Activated CD8-positive, alpha-beta T cell treated with anti-CD3 and anti-CD28 coated beads for 36 hours (primary cell): ENCODE measurements at regions of chr11 and their contacts with region 1.

Region 1: GRCh38 chr11:73157053-73158010 is 15.2 kb upstream of the FCHSD2 start:
- DNase-seq: peak; percentile 16
- ATAC-seq: no peak
- H3K4me3 Mint-ChIP-seq: no peak overlapping the region
- H3K27ac Mint-ChIP-seq: no peak overlapping the region
- H3K4me1 Mint-ChIP-seq: peaks cover 47% of the 10 kb centered on the region
- H3K27me3 Mint-ChIP-seq: no peaks in the 10 kb centered on the region
- CTCF ChIP-seq: no peak

Region 2: GRCh38 chr11:73141848-73142286 is 15.5 kb before region 1 on chr11:
- CTCF ChIA-PET with region 1: interaction called, 20 read pairs
- POLR2A ChIA-PET with region 1: interaction called, 16 read pairs
- intact Hi-C with region 1: no loop called
- DNase-seq: peak; percentile 72
- ATAC-seq: peak; percentile 17
- H3K4me3 Mint-ChIP-seq: peak overlapping the region; percentile 98
- H3K27ac Mint-ChIP-seq: peak overlapping the region; percentile 94
- H3K4me1 Mint-ChIP-seq: peaks cover 40% of the 10 kb centered on the region
- H3K27me3 Mint-ChIP-seq: no peaks in the 10 kb centered on the region
- CTCF ChIP-seq: no peak

Region 3: GRCh38 chr11:73288873-73289707 is 131.8 kb after region 1 on chr11:
- CTCF ChIA-PET with region 1: no interaction called
- POLR2A ChIA-PET with region 1: no interaction called
- intact Hi-C with region 1: no loop called
- DNase-seq: peak; percentile 70
- ATAC-seq: peak; percentile 92
- H3K4me3 Mint-ChIP-seq: no peak overlapping the region
- H3K27ac Mint-ChIP-seq: no peak overlapping the region
- H3K4me1 Mint-ChIP-seq: peaks cover 12% of the 10 kb centered on the region
- H3K27me3 Mint-ChIP-seq: no peaks in the 10 kb centered on the region
- CTCF ChIP-seq: peak; percentile 93